ENCODE measurements at regions of chr5 and their contacts with region 1.

Region 1: GRCh38 chr5:142133330-142134206 is 25.0 kb downstream of the NDFIP1 start:
- DNase-seq: no peak
- H3K4me3 ChIP-seq: no peak overlapping the region
- H3K27ac ChIP-seq: no peak overlapping the region
- H3K4me1 ChIP-seq: peaks cover 0 to 7% (median 0%) of the 10 kb centered on the region in 4 donors
- H3K27me3 ChIP-seq: no peaks in the 10 kb centered on the region
- CTCF ChIP-seq: no peak
- EP300 ChIP-seq: no peak
- POLR2A ChIP-seq: no peak

Region 2: DNA sequence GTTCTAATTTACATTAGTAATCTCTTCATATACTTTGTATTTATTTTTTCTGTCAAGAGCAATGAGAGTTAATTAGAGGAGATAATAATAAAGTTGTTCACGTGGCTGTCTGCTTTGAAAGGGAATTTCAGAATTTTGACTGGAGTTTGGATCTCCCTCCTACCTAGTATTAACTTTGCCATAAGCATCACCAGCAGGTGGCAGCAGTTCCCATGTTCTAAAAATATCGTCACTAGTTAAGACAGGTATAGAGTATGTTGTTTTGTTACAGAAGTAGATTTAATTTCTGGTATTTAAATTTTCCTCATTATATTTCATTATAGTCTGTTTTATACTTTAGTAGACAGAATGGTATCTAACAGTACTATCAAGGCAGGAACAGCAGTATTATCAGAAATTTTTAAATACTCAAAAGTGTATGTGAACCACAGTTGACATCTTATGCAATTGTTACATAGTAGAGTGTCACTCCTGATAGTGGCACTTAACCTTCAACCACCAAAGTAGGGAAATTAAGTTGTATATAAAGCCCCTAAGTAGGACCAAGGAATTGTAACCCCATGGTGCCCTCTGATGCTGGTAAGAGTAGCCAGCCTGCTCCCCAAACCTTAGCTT is 141.1 kb before region 1 on chr5:
- in situ Hi-C with region 1: loop called in 3 of 4 experiments (anchors 5 to 10 kb)
- intact Hi-C with region 1: no loop called
- DNase-seq: peak; percentile 79
- H3K4me3 ChIP-seq: no peak overlapping the region
- H3K27ac ChIP-seq: no peak overlapping the region
- H3K4me1 ChIP-seq: no peaks in the 10 kb centered on the region
- H3K27me3 ChIP-seq: no peaks in the 10 kb centered on the region
- CTCF ChIP-seq: peak; percentile 69 to 81 (median 80)
- EP300 ChIP-seq: no peak
- POLR2A ChIP-seq: no peak